ENCODE measurements at regions of chr20 and their contacts with region 1.

Region 1: DNA sequence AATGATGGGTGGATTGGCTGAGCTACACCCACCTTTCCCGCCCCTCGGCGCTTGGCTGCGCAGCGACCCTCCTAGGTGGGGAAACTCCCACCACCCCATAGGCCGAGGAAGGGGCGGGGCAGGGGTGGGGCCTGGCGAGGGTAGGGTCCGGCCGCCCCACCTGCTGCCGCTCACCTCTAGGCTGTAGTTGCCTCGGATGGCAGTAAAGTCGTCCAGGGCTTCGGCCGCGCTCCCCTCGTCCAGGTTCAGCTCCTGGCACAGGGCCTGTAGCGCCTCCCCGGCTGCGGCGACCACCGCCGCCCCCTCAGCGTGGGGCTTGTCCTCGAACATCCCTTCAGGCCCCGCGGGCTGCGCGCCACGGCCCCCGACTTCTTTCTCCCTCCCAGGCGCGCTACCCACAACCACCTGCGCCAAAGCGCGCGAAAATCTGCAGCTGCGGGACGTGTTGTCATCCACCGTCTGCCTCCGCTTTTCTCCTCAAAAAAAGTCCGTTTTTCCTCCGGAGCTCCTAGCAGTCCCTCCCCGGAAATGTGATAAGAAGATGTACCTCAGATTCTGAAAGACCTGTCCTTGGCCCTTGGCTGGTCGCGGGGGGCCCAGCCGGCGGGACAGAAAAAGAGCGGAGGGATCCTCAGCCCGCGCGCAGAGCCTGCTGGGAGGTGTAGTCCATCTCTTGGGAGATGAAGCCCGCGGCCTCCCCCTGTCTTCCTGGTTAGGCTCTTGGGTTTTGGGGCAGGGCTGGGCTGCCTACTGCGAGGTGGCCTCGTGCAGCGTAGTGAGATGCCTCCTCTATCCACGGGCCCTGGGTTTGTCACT is at the start of gene RBL1:
- DNase-seq: peak; percentile 72 to 93 (median 91)
- ATAC-seq: peak; percentile 91
- H3K4me3 ChIP-seq: peak within 1 kb of the TSS; percentile 93
- H3K4me3 Mint-ChIP-seq: peak within 1 kb of the TSS; percentile 88 to 100 (median 98)
- H3K27ac ChIP-seq: peak within 1 kb of the TSS; percentile 91
- H3K27ac Mint-ChIP-seq: peak within 1 kb of the TSS; percentile 96 to 100 (median 100)
- H3K4me1 ChIP-seq: peaks cover 17 to 18% of the 10 kb centered on the region in 2 donors
- H3K4me1 Mint-ChIP-seq: peaks cover 15 to 42% (median 34%) of the 10 kb centered on the region in 7 donors
- H3K27me3 ChIP-seq: no peaks in the 10 kb centered on the region
- H3K27me3 Mint-ChIP-seq: peaks cover 0 to 6% (median 0%) of the 10 kb centered on the region in 5 donors
- total RNA-seq, gene RBL1: 27.4 to 51.2 (median 30.6) TPM

Region 2: DNA sequence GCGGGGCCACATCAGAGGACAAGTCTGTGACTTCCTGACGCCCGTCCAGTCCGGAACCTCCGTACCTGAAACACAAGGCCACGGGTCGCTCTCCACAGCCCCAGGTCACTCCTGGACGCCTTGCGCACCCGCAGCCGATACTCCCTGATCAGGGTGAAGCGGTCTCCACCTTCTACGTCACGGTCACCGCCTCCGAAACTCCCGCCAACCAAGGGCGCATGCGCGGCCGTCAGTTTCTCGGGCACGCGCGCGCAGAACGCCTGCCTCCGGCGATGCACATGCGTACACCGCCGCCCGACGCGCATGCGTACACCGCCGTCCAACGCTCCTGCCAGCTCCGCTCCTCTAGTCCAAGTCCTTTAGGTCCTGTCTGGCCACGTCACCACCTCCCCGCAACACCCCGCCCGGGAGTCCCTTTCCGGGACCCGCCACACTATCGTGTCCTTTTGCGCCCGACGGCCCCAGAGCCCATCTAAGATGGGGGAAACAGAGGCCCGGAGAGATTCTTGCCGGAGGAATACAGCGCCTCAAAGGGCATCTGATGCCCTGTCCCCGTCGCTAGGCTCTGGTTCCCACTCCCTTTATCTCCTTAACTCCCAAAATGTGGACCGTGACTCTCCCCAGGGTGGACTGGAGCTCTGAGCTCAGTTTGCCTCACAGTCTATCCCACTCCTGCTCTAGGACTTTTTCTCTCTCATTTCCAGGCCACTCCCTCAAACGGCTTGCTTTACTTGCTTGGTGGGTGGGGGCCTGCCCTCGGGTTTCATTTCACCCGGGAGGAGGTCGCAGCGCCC is 322.0 kb before region 1 on chr20 and contains the start of gene DSN1:
- CTCF ChIA-PET with region 1: no interaction called
- POLR2A ChIA-PET with region 1: no interaction called
- intact Hi-C with region 1: loop called in 1 of 2 experiments (anchors 5 kb)
- DNase-seq: peak; percentile 94 to 100 (median 97)
- ATAC-seq: peak; percentile 90
- H3K4me3 ChIP-seq: peak within 1 kb of the TSS; percentile 96
- H3K4me3 Mint-ChIP-seq: peak within 1 kb of the TSS; percentile 83 to 98 (median 95)
- H3K27ac ChIP-seq: peak within 1 kb of the TSS; percentile 93
- H3K27ac Mint-ChIP-seq: peak within 1 kb of the TSS; percentile 90 to 100 (median 97)
- H3K4me1 ChIP-seq: peaks cover 8 to 13% of the 10 kb centered on the region in 2 donors
- H3K4me1 Mint-ChIP-seq: peaks cover 8 to 36% (median 27%) of the 10 kb centered on the region in 7 donors
- H3K27me3 ChIP-seq: no peaks in the 10 kb centered on the region
- H3K27me3 Mint-ChIP-seq: peaks cover 0 to 2% (median 0%) of the 10 kb centered on the region in 5 donors
- total RNA-seq, gene DSN1: 9.2 to 27.5 (median 13.4) TPM

Region 3: GRCh38 chr20:37042986-37043972 is 52.5 kb before region 1 on chr20:
- CTCF ChIA-PET with region 1: no interaction called
- POLR2A ChIA-PET with region 1: interaction called, 8 read pairs
- intact Hi-C with region 1: loop called in 1 of 2 experiments (anchors 1 kb)
- DNase-seq: peak in 8 of 9 donors; percentile 13 to 48 (median 38)
- ATAC-seq: peak; percentile 76
- H3K4me3 ChIP-seq: peak overlapping the region; percentile 67
- H3K4me3 Mint-ChIP-seq: peak overlapping the region; percentile 81 to 97 (median 87)
- H3K27ac ChIP-seq: peak overlapping the region; percentile 59
- H3K27ac Mint-ChIP-seq: peak overlapping the region; percentile 78 to 99 (median 93)
- H3K4me1 ChIP-seq: peaks cover 14 to 17% of the 10 kb centered on the region in 2 donors
- H3K4me1 Mint-ChIP-seq: peaks cover 6 to 38% (median 32%) of the 10 kb centered on the region in 7 donors
- H3K27me3 ChIP-seq: no peaks in the 10 kb centered on the region
- H3K27me3 Mint-ChIP-seq: no peaks in the 10 kb centered on the region

Region 4: DNA sequence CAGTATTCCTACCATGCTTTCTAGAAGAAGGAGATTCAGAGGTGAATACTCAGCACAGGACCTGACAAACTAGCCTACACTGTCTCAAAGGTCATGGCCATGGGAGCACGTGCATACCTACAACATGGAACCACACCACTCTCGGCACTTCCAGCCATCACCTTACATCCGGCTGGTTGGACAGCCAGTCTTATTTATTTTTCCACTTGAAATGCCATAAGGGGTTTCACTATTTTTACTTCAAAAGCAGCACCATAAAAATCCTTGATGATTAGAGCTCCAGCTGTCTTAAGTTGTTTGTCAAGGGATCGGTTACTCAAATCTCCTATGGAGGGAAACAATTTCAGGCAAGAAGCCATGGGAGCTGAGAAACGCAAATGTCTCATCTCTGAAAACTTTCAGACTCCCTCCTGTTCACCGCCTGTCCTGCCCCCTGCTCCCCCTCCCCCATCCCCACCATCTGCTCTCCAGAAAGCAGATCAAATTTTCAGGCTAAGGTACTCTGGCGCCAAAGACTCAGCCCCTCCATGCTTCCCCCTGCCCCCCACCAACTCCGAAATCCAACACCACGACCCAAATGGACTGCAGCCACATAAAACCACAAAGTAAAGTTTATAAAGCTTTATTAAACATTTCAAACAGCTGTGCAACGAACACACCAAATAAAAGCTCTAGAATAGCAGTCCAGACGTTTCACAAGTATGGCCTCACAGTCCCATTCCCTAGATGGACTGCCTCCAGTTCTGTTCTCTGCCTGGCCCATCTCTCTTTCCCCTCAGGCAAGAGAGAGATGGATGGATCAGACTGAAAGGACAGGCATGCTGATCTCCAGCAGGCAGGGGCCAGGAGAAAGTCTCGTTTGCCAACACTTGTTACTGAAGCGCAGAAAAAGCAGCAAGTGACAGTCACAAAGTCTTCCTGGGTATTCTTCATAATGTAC is 421.3 kb after region 1 on chr20:
- CTCF ChIA-PET with region 1: no interaction called
- POLR2A ChIA-PET with region 1: no interaction called
- intact Hi-C with region 1: no loop called
- DNase-seq: no peak
- ATAC-seq: no peak
- H3K4me3 ChIP-seq: no peak overlapping the region
- H3K4me3 Mint-ChIP-seq: no peak overlapping the region
- H3K27ac ChIP-seq: no peak overlapping the region
- H3K27ac Mint-ChIP-seq: no peak overlapping the region
- H3K4me1 ChIP-seq: no peaks in the 10 kb centered on the region
- H3K4me1 Mint-ChIP-seq: peaks cover 17 to 43% (median 33%) of the 10 kb centered on the region in 7 donors
- H3K27me3 ChIP-seq: no peaks in the 10 kb centered on the region
- H3K27me3 Mint-ChIP-seq: peaks cover 0 to 12% (median 0%) of the 10 kb centered on the region in 5 donors

Region 5: GRCh38 chr20:37527638-37528441 is 432.0 kb after region 1 on chr20 and contains the start of gene BLCAP:
- CTCF ChIA-PET with region 1: no interaction called
- POLR2A ChIA-PET with region 1: interaction called, 5 read pairs
- intact Hi-C with region 1: loop called in 1 of 2 experiments (anchors 5 kb)
- DNase-seq: peak; percentile 89 to 98 (median 96)
- ATAC-seq: peak; percentile 96
- H3K4me3 ChIP-seq: peak within 1 kb of the TSS; percentile 86
- H3K4me3 Mint-ChIP-seq: peak within 1 kb of the TSS; percentile 81 to 95 (median 90)
- H3K27ac ChIP-seq: peak within 1 kb of the TSS; percentile 99
- H3K27ac Mint-ChIP-seq: peak within 1 kb of the TSS; percentile 98 to 100 (median 99)
- H3K4me1 ChIP-seq: peaks cover 30 to 35% of the 10 kb centered on the region in 2 donors
- H3K4me1 Mint-ChIP-seq: peaks cover 41 to 52% (median 46%) of the 10 kb centered on the region in 7 donors
- H3K27me3 ChIP-seq: no peaks in the 10 kb centered on the region
- H3K27me3 Mint-ChIP-seq: peaks cover 0 to 2% (median 0%) of the 10 kb centered on the region in 5 donors
- total RNA-seq, gene BLCAP: 42.1 to 94.7 (median 73.4) TPM

Region 6: GRCh38 chr20:38962044-38962927 is 1866.5 kb after region 1 on chr20 and contains the start of gene DHX35:
- CTCF ChIA-PET with region 1: no interaction called
- POLR2A ChIA-PET with region 1: no interaction called
- intact Hi-C with region 1: loop called in 1 of 2 experiments (anchors 5 kb)
- DNase-seq: peak; percentile 96 to 99 (median 98)
- ATAC-seq: peak; percentile 100
- H3K4me3 ChIP-seq: peak within 1 kb of the TSS; percentile 97
- H3K4me3 Mint-ChIP-seq: peak within 1 kb of the TSS; percentile 92 to 97 (median 96)
- H3K27ac ChIP-seq: peak within 1 kb of the TSS; percentile 80
- H3K27ac Mint-ChIP-seq: peak within 1 kb of the TSS; percentile 92 to 98 (median 96)
- H3K4me1 ChIP-seq: peaks cover 6 to 16% of the 10 kb centered on the region in 2 donors
- H3K4me1 Mint-ChIP-seq: peaks cover 16 to 46% (median 34%) of the 10 kb centered on the region in 7 donors
- H3K27me3 ChIP-seq: no peaks in the 10 kb centered on the region
- H3K27me3 Mint-ChIP-seq: no peaks in the 10 kb centered on the region
- total RNA-seq, gene DHX35: 8.0 to 13.3 (median 10.6) TPM

Measured in naive thymus-derived CD4-positive, alpha-beta T cell (primary cell).